A673 (cell line): ENCODE measurements at regions of chr2 and their contacts with region 1.

Region 1: GRCh38 chr2:23926750-23927571 is at the start of gene ATAD2B:
- DNase-seq: peak; percentile 97
- H3K4me3 ChIP-seq: peak within 1 kb of the TSS; percentile 99
- H3K27ac ChIP-seq: peak within 1 kb of the TSS; percentile 99
- H3K4me1 ChIP-seq: peaks cover 10% of the 10 kb centered on the region
- H3K27me3 ChIP-seq: no peaks in the 10 kb centered on the region
- CTCF ChIP-seq: peak; percentile 77
- total RNA-seq, gene ATAD2B: 27.9 and 28.5 TPM in 2 replicates

Region 2: DNA sequence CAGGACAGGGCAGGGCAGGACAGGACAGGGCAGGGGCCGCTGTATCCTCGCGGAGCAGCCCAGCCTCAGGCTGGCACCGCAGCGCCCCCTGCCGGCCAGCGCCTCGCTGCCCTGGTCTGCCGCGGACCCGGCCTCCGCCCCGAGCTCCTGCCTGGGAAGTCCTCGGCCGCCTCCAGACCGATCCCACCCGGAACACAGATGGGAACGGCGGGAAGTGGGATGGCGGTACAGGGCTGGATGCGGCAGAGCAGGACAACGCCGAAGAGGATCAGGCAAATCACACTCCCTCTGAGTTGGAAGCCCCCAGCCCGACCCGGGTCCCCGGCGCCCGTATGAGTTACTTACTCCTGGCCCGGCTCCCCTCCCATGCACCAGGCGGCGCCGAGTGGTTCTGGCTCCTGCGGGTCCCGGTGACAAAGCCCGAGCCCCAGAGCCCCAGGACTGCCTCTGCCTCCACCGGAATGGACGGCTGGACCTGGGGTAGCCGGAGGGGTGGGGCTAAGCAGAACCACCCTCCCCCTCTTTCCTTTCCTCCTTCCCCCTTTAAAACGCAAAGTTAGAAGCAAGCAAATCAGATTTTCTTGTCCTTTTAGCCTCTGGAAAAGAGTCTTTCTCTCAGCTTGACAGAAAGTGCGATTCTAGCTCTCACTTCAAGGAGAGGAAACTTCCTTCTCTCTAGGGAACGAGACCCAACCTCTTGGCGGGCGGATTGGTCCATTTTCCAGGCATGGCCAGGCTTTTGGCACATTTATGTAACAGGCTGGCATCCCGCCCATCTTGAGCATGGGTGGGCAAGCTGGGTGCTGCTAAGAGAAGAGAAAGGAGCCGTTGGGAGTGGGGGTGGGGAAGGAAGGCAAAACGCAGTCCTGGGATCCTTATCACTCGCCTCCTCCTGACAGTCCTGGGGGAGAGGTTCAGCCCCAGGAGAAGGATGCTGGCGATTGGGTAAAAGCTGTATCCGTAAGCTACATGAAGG is 157.7 kb after region 1 on chr2 and contains the start of gene TP53I3:
- CTCF ChIA-PET with region 1: interaction called, 10 read pairs
- POLR2A ChIA-PET with region 1: no interaction called
- intact Hi-C with region 1: loop called (anchors 5 kb)
- DNase-seq: peak; percentile 83
- H3K4me3 ChIP-seq: peak within 1 kb of the TSS; percentile 63
- H3K27ac ChIP-seq: peak within 1 kb of the TSS; percentile 53
- H3K4me1 ChIP-seq: peaks cover 4% of the 10 kb centered on the region
- H3K27me3 ChIP-seq: no peaks in the 10 kb centered on the region
- CTCF ChIP-seq: peak; percentile 88
- total RNA-seq, gene TP53I3: 2.8 and 3.0 TPM in 2 replicates

Region 3: DNA sequence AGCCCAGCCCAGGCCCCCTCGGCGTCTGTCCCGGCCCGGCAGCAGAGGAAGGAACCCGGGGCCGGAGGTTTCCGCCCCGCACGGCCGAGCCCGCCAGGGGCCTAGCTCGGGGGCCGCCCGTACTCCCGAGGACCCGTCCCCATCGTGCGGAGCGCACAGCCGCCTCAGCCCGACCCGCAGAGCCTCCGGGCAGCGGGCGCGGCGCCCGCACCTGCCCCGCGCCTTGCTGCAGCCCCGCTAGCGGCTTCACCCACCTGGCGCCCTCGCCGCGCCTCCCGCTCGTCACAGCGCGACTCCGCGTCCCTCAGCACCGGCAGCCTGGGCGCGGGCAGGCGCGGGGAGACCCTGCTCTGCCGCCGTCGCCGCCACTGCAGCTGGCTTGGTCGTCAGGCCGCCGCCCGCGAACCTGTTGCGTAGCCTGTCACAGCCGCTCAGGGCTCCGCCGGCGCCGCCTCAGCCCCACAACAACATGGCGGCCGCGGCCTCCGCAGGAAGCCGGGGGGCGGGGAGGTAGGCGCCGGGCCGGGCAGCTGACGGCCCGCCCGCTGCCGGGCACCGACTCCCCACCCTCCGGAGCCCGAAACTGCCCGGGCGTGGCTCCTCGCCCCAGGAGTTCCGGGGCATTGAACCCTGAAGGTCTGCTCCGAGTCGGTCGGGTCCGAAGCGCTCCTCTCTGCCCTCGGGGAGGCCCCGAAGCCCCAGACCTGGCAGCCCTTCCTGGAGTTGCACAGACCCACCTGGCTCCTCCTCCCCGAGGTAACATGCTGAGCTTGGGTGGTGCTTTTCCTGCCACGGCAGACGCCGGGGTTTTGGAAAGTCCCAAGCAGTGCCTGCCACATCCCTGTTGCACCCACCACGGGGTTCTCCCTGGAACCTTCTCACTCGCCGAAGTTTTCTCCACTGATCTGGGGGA is 433.3 kb after region 1 on chr2 and contains the start of gene ITSN2:
- CTCF ChIA-PET with region 1: no interaction called
- POLR2A ChIA-PET with region 1: interaction called, 13 read pairs
- intact Hi-C with region 1: no loop called
- DNase-seq: peak; percentile 83
- H3K4me3 ChIP-seq: peak within 1 kb of the TSS; percentile 89
- H3K27ac ChIP-seq: peak within 1 kb of the TSS; percentile 75
- H3K4me1 ChIP-seq: peaks cover 4% of the 10 kb centered on the region
- H3K27me3 ChIP-seq: no peaks in the 10 kb centered on the region
- CTCF ChIP-seq: no peak
- total RNA-seq, gene ITSN2: 16.4 and 21.4 TPM in 2 replicates